ENCODE measurements at regions of chr11 and their contacts with region 1.

Region 1: DNA sequence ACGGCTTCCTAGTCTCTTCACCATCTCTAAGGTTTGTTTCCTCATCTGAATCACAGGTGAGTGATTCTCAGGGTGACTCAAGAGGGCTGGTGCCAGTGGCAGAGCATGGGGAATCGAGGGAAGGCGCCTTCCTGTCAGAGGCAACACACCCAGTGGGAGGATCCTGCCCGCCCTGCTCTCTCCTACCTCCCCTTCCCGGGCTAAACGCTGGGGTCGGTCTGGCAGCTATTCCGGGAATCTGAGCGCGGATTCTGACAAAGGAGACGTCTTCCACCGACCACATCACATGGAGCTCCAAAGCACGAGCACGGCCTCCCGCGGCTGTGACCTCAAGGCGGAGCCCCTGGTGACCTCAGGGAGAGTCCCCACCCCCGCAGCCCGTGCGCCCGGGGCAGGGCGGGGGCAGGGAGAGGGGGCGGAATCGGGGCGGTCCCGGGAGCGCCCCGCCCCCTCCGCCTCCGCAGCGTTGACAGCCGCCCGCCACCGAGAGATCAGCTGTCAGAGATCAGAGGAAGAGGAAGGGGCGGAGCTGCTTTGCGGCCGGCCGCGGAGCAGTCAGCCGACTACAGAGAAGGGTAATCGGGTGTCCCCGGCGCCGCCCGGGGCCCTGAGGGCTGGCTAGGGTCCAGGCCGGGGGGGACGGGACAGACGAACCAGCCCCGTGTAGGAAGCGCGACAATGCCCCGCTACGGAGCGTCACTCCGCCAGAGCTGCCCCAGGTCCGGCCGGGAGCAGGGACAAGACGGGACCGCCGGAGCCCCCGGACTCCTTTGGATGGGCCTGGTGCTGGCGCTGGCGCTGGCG is at the start of gene SMPD1:
- DNase-seq: peak; percentile 95 to 97 (median 96)
- ATAC-seq: peak; percentile 96 to 98 (median 98)
- H3K4me3 ChIP-seq: peak within 1 kb of the TSS; percentile 62 to 97 (median 82)
- H3K27ac ChIP-seq: peak within 1 kb of the TSS; percentile 60 to 96 (median 90)
- H3K4me1 ChIP-seq: peaks cover 0 to 36% (median 19%) of the 10 kb centered on the region in 12 donors
- H3K27me3 ChIP-seq: no peaks in the 10 kb centered on the region
- CTCF ChIP-seq: no peak
- POLR2A ChIP-seq: peak; percentile 30 to 92
- total RNA-seq, gene SMPD1: 53.8 to 92.3 (median 67.8) TPM

Region 2: GRCh38 chr11:6233984-6234386 is 156.1 kb before region 1 on chr11:
- intact Hi-C with region 1: no loop called
- DNase-seq: no peak
- ATAC-seq: peak in 1 of 4 donors; percentile 0
- H3K4me3 ChIP-seq: peak overlapping the region; percentile 28 to 95 (median 83)
- H3K27ac ChIP-seq: peak overlapping the region in 11 of 12 donors; percentile 55 to 91 (median 81)
- H3K4me1 ChIP-seq: peaks cover 0 to 40% (median 14%) of the 10 kb centered on the region in 12 donors
- H3K27me3 ChIP-seq: no peaks in the 10 kb centered on the region
- CTCF ChIP-seq: no peak
- POLR2A ChIP-seq: no peak

Region 3: DNA sequence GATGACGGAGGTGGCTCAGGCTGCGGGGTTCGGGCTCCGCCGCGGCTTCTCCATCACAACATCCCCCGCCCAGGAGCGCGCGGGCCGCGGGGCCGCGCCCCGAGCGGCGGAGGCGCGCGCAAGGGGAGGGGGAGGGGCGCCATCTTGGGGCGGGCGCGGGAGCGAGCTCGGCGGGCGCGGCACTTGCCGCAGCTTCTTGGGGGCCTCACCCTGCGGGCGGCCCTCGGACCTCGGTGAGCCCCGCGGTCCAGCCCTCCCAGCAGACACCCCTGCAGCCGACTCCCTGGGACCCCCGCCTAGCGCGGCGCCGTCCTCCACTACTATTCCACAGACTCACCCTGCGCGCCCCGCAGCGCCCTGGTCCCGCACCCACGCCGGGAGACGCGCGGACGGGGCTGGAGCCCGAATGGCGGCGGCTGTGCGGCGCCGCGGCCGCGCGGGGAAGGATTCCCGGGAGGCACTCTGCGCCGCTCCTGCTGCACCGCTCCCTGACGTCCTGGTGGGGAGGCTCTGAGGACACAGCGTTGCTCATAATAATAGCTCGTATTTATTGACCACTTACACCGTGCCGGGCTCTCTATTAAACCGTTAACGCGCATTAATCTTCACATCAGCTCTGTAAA is 29.0 kb after region 1 on chr11 and contains the start of gene APBB1:
- intact Hi-C with region 1: loop called in 4 of 10 experiments (anchors 1 to 2 kb)
- DNase-seq: peak; percentile 65 to 85 (median 78)
- ATAC-seq: peak; percentile 68 to 97 (median 90)
- H3K4me3 ChIP-seq: peak within 1 kb of the TSS; percentile 74 to 100 (median 94)
- H3K27ac ChIP-seq: peak within 1 kb of the TSS; percentile 89 to 99 (median 94)
- H3K4me1 ChIP-seq: peaks cover 0 to 40% (median 14%) of the 10 kb centered on the region in 12 donors
- H3K27me3 ChIP-seq: peaks cover 0 to 9% (median 0%) of the 10 kb centered on the region in 9 donors
- CTCF ChIP-seq: peak in 5 of 12 donors; percentile 8 to 20 (median 16)
- POLR2A ChIP-seq: peak; percentile 1 to 75
- total RNA-seq, gene APBB1: 50.3 to 101 (median 83.5) TPM

Region 4: GRCh38 chr11:6473481-6474422 is 83.6 kb after region 1 on chr11 and contains the start of gene TRIM3:
- intact Hi-C with region 1: loop called in 2 of 10 experiments (anchors 2 to 5 kb)
- DNase-seq: peak; percentile 96 to 97 (median 96)
- ATAC-seq: peak; percentile 70 to 93 (median 88)
- H3K4me3 ChIP-seq: peak within 1 kb of the TSS; percentile 62 to 99 (median 86)
- H3K27ac ChIP-seq: peak within 1 kb of the TSS; percentile 84 to 97 (median 93)
- H3K4me1 ChIP-seq: peaks cover 0 to 35% (median 19%) of the 10 kb centered on the region in 12 donors
- H3K27me3 ChIP-seq: no peaks in the 10 kb centered on the region
- CTCF ChIP-seq: peak in 4 of 12 donors; percentile 23 to 47 (median 40)
- POLR2A ChIP-seq: peak; percentile 83 to 87
- total RNA-seq, gene TRIM3: 7.7 to 18.8 (median 10.4) TPM

Region 5: DNA sequence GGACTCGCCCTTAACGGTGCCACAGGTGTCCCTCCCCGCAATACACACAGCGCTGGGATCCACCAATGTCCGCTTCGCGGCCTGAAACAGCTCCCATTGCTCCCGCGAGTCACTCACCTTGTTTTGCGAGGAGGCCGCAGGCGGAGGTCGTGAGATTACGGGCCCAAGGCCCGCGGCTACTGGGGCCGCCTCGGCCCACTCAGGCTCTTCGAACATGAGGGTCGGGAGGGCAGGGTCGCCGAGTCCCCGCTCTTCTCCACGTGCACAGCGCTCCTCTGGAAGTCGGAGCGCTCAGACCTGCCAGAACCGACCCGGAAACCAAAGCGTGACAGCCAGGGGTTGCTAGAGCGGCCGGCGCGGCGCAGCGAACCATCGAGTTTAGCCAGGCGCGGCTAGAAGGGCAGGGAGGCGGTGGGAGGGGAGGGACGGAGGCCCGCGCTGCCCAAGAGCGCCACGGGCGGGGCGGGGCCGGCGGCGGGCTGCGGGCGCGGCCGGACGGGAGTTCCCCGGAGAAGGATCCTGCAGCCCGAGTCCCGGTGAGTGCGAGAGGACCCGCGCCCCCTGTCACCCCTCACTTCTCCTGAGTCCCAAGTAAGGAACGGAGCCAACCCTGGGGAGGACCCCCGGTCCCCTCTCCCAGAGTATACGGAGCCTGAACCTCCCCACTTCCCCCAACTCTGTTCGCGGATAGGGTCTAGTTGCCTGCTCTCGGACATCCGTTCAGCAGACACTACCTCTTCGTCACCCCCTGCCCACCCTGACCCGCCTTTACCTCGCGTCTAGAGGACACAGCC is 213.4 kb after region 1 on chr11 and contains the starts of genes ILK and RRP8:
- intact Hi-C with region 1: loop called in 1 of 10 experiments (anchors 5 kb)
- DNase-seq: peak; percentile 94 to 96 (median 95)
- ATAC-seq: peak; percentile 73 to 92 (median 90)
- H3K4me3 ChIP-seq: peak within 1 kb of the TSS; percentile 52 to 97 (median 92)
- H3K27ac ChIP-seq: peak within 1 kb of the TSS; percentile 83 to 99 (median 98)
- H3K4me1 ChIP-seq: peaks cover 17 to 80% (median 58%) of the 10 kb centered on the region in 12 donors
- H3K27me3 ChIP-seq: no peaks in the 10 kb centered on the region
- CTCF ChIP-seq: peak in 8 of 12 donors; percentile 8 to 63 (median 38)
- POLR2A ChIP-seq: peak; percentile 54 to 86
- total RNA-seq, gene ILK: 177 to 259 (median 222) TPM
- total RNA-seq, gene RRP8: 11.2 to 23.5 (median 18.0) TPM

Region 6: GRCh38 chr11:6705905-6706535 is 315.9 kb after region 1 on chr11:
- intact Hi-C with region 1: loop called in 2 of 10 experiments (anchors 10 kb)
- DNase-seq: peak in 1 of 5 donors; percentile 46
- ATAC-seq: peak in 3 of 4 donors; percentile 49 to 61 (median 59)
- H3K4me3 ChIP-seq: no peak overlapping the region
- H3K27ac ChIP-seq: peak overlapping the region in 8 of 12 donors; percentile 7 to 53 (median 30)
- H3K4me1 ChIP-seq: peaks cover 0 to 25% (median 16%) of the 10 kb centered on the region in 12 donors
- H3K27me3 ChIP-seq: no peaks in the 10 kb centered on the region
- CTCF ChIP-seq: peak; percentile 82 to 97 (median 93)
- POLR2A ChIP-seq: no peak

Measured in heart left ventricle (tissue), 16 donors.